Endothelial cell of umbilical vein (primary cell): ENCODE measurements at regions of chr1 and their contacts with region 1.

Region 1: DNA sequence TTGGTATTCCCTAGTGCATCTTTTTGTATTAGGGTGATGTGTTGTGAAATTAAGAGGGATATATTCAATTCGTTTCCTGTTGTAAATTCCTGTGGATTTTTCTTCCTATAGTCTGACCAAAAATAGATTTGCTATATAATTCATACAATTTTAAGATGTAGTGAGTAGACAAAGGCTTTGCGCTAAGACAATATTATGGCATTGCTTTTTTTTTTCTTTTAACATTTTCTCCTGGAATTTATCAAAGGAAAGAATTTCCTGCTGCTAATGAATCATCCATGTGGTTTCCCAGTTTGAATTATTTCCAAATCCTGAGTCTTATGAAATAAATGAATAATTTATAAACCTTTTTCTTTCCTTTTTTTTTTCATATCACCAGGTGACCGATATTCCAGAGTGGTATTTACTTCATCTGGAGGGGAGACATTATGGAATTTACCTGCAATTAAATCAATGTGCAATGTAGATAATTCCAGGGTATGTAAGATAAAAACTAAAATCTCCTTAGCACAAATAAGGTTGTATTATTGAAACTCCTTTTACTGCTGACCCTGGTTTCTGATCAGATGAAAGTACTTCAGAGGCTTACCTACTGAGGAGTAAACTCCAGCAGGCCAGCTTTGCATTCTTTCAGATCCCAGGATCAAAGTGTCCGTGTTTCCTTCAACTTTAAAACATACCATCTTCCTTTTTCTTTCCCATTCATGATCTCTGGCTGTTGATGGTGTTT is 148.4 kb downstream of the TLR5 start:
- DNase-seq: peak; percentile 79
- H3K4me3 ChIP-seq: peak overlapping the region in 1 of 3 experiments; percentile 52
- H3K27ac ChIP-seq: peak overlapping the region; percentile 81
- H3K4me1 ChIP-seq: peaks cover 36% of the 10 kb centered on the region
- H3K27me3 ChIP-seq: no peaks in the 10 kb centered on the region
- CTCF ChIP-seq: no peak
- POLR2A ChIP-seq: no peak

Region 2: DNA sequence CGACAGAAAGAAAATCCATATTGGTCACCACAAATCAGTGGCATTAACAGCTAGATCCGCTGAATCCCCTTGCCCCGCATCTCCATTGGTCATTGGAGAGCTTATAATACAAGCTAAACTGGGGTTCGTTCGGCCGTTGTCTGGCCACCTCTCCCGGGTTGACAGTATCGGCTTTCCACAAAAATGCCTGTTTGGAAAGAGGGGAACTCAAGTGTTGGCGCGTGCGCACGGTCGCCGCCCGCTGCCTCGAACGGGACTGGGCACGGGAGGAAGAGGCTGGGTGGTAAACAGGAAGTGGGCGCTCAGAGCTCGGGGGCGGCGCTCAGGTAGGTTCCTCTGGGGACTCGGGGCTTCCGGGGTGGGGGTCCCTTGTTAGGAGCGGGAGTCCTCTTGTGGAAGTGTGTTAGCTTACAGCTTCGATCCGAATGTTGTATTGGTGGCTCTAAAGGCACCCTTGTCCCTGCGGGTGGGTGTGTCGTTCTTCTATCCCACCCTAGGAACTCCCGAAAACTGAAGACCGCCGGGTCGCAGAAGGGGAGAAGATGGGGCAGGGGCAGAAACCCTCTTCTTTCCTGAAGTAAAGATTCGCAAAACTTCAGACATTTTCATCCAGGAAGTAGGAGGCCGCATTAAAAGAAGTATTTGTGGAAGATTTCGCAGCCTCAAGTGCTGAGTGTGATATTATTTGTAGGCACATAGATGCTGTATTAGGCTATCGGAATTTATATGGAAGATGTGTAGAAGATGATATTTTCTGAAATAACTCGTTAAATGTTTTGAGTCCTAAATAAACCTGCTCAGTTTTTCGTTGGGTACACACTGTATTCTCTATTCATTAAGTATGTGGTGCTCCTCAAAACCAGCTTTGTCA is 281.3 kb before region 1 on chr1:
- CTCF ChIA-PET with region 1: no interaction called
- POLR2A ChIA-PET with region 1: no interaction called
- dilution Hi-C with region 1: no loop called
- intact Hi-C with region 1: loop called (anchors 10 kb)
- DNase-seq: peak; percentile 97
- H3K4me3 ChIP-seq: peak overlapping the region; percentile 54 to 98 (median 92)
- H3K27ac ChIP-seq: peak overlapping the region; percentile 90
- H3K4me1 ChIP-seq: peaks cover 14% of the 10 kb centered on the region
- H3K27me3 ChIP-seq: no peaks in the 10 kb centered on the region
- CTCF ChIP-seq: no peak
- POLR2A ChIP-seq: no peak

Region 3: GRCh38 chr1:222814536-222815439 is 179.9 kb before region 1 on chr1 and contains the start of gene DISP1:
- CTCF ChIA-PET with region 1: interaction called, 4 read pairs
- POLR2A ChIA-PET with region 1: no interaction called
- dilution Hi-C with region 1: no loop called
- intact Hi-C with region 1: loop called (anchors 1 kb)
- DNase-seq: peak; percentile 65
- H3K4me3 ChIP-seq: peak within 1 kb of the TSS; percentile 41 to 84 (median 70)
- H3K27ac ChIP-seq: peak within 1 kb of the TSS; percentile 70
- H3K4me1 ChIP-seq: peaks cover 25% of the 10 kb centered on the region
- H3K27me3 ChIP-seq: no peaks in the 10 kb centered on the region
- CTCF ChIP-seq: no peak
- POLR2A ChIP-seq: peak; percentile 44
- total RNA-seq, gene DISP1: 2.4 and 3.9 TPM in 2 replicates

Region 4: GRCh38 chr1:223008808-223009207 is 14.1 kb after region 1 on chr1:
- CTCF ChIA-PET with region 1: interaction called, 3 read pairs
- POLR2A ChIA-PET with region 1: no interaction called
- dilution Hi-C with region 1: no loop called
- intact Hi-C with region 1: loop called (anchors 1 kb)
- DNase-seq: no peak
- H3K4me3 ChIP-seq: no peak overlapping the region
- H3K27ac ChIP-seq: no peak overlapping the region
- H3K4me1 ChIP-seq: no peaks in the 10 kb centered on the region
- H3K27me3 ChIP-seq: no peaks in the 10 kb centered on the region
- CTCF ChIP-seq: no peak
- POLR2A ChIP-seq: no peak

Region 5: GRCh38 chr1:223022641-223023473 is 28.2 kb after region 1 on chr1:
- CTCF ChIA-PET with region 1: no interaction called
- POLR2A ChIA-PET with region 1: no interaction called
- dilution Hi-C with region 1: no loop called
- intact Hi-C with region 1: no loop called
- DNase-seq: no peak
- H3K4me3 ChIP-seq: no peak overlapping the region
- H3K27ac ChIP-seq: no peak overlapping the region
- H3K4me1 ChIP-seq: no peaks in the 10 kb centered on the region
- H3K27me3 ChIP-seq: no peaks in the 10 kb centered on the region
- CTCF ChIP-seq: no peak
- POLR2A ChIP-seq: no peak

Region 6: GRCh38 chr1:224489534-224490365 is 1495.1 kb after region 1 on chr1:
- CTCF ChIA-PET with region 1: no interaction called
- POLR2A ChIA-PET with region 1: no interaction called
- dilution Hi-C with region 1: no loop called
- intact Hi-C with region 1: loop called (anchors 5 kb)
- DNase-seq: no peak
- H3K4me3 ChIP-seq: no peak overlapping the region
- H3K27ac ChIP-seq: no peak overlapping the region
- H3K4me1 ChIP-seq: no peaks in the 10 kb centered on the region
- H3K27me3 ChIP-seq: no peaks in the 10 kb centered on the region
- CTCF ChIP-seq: no peak
- POLR2A ChIP-seq: no peak